B cell (primary cell): ENCODE measurements at regions of chr5 and their contacts with region 1.

Region 1: GRCh38 chr5:140244525-140245025 is 58.3 kb downstream of the PFDN1 start:
- DNase-seq: peak; percentile 83
- ATAC-seq: peak; percentile 82
- H3K4me3 ChIP-seq: no peak overlapping the region
- H3K4me3 Mint-ChIP-seq: no peak overlapping the region
- H3K27ac ChIP-seq: no peak overlapping the region
- H3K27ac Mint-ChIP-seq: no peak overlapping the region
- H3K4me1 ChIP-seq: peaks cover 14 to 19% of the 10 kb centered on the region in 2 donors
- H3K4me1 Mint-ChIP-seq: peaks cover 22% of the 10 kb centered on the region
- H3K27me3 ChIP-seq: no peaks in the 10 kb centered on the region
- H3K27me3 Mint-ChIP-seq: no peaks in the 10 kb centered on the region
- CTCF ChIP-seq: peak; percentile 87

Region 2: DNA sequence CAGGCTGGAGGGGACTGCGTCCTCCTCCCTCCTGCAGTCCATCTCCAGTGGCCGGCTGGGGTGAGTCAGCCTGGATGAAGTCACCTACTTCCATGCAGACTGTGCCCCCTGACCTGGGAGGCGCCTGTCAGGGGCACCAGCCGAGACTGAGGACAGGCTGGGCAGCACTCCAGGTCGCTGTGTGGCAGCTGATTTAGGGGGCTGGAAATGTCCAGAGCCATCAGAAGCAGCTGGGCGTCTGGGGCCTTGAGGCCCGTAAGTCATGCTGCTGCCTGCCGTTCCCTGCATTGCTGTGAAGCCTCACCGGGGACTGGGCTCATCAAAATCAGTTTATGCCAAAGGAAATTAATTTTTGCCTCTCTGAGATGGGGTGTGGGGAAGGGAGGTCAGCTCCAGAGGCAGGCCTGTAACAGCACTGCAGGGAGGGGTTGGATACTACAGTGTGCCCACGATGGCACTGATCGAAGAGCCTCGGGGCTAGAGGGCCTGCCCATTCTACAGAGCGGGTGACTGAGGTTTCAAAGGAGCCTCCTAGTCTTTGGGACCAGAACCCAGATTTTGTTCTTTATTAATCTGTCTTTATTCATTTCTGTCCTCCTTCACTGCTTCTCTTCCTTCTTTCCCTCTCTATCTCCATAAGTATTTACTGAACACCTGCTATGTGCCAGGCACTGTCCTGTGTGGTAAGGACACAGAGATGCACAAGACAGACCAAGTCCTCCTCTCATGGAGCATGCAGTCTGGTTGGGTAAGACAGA is 519.3 kb before region 1 on chr5:
- CTCF ChIA-PET with region 1: no interaction called
- POLR2A ChIA-PET with region 1: no interaction called
- intact Hi-C with region 1: no loop called
- DNase-seq: no peak
- ATAC-seq: no peak
- H3K4me3 ChIP-seq: no peak overlapping the region
- H3K4me3 Mint-ChIP-seq: no peak overlapping the region
- H3K27ac ChIP-seq: no peak overlapping the region
- H3K27ac Mint-ChIP-seq: no peak overlapping the region
- H3K4me1 ChIP-seq: peaks cover 6 to 29% of the 10 kb centered on the region in 2 donors
- H3K4me1 Mint-ChIP-seq: peaks cover 18% of the 10 kb centered on the region
- H3K27me3 ChIP-seq: no peaks in the 10 kb centered on the region
- H3K27me3 Mint-ChIP-seq: no peaks in the 10 kb centered on the region
- CTCF ChIP-seq: no peak

Region 3: GRCh38 chr5:140141241-140141640 is 103.3 kb before region 1 on chr5:
- CTCF ChIA-PET with region 1: no interaction called
- POLR2A ChIA-PET with region 1: no interaction called
- intact Hi-C with region 1: no loop called
- DNase-seq: no peak
- ATAC-seq: no peak
- H3K4me3 ChIP-seq: no peak overlapping the region
- H3K4me3 Mint-ChIP-seq: no peak overlapping the region
- H3K27ac ChIP-seq: no peak overlapping the region
- H3K27ac Mint-ChIP-seq: no peak overlapping the region
- H3K4me1 ChIP-seq: peaks cover 14 to 29% of the 10 kb centered on the region in 2 donors
- H3K4me1 Mint-ChIP-seq: peaks cover 18% of the 10 kb centered on the region
- H3K27me3 ChIP-seq: peaks cover 0 to 16% (median 9%) of the 10 kb centered on the region in 4 experiments
- H3K27me3 Mint-ChIP-seq: peaks cover 14% of the 10 kb centered on the region
- CTCF ChIP-seq: no peak

Region 4: DNA sequence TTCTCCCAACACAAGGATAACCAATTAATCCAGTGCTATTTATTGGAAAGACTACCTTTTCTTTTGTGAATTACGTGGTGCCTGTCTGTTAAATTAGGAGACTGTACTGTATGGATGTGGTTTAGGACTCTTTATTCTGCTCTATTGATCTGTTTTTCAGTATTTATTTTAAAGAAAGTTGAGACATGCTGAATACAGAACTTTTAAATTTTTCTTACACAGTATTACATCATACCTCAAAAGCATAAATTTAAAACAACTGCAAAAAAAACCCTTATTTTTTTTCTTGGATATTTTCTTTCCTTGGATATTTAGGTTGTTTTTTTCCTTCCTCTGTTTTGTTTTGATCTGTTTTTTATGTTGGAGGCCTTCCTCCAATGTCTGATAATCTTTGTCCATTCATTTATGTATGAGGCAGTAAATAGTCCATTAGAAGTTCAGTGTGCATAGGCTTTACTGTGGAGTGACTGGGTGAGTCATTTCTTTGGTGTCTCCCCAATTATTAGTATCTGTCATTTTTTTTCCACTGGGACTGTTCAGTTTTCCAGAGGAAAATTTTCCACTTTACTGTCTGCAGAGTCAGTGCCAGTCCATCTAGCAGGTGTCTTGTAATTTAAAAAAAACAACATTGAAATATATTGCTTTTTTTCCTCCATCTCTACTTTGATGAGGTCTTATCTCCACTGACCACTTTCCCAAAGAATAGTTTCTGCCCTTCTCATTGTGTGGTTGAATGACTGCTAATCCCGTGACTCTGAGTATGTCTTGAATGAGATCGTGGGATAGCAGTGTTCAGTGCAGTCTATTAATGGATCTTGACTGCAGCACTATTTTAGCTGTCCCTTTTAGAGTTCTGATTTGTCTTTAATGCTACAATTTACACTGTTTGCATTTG is 54.4 kb before region 1 on chr5:
- CTCF ChIA-PET with region 1: no interaction called
- POLR2A ChIA-PET with region 1: no interaction called
- intact Hi-C with region 1: no loop called
- DNase-seq: no peak
- ATAC-seq: no peak
- H3K4me3 ChIP-seq: no peak overlapping the region
- H3K4me3 Mint-ChIP-seq: no peak overlapping the region
- H3K27ac ChIP-seq: no peak overlapping the region
- H3K27ac Mint-ChIP-seq: no peak overlapping the region
- H3K4me1 ChIP-seq: no peaks in the 10 kb centered on the region
- H3K4me1 Mint-ChIP-seq: no peaks in the 10 kb centered on the region
- H3K27me3 ChIP-seq: no peaks in the 10 kb centered on the region
- H3K27me3 Mint-ChIP-seq: no peaks in the 10 kb centered on the region
- CTCF ChIP-seq: no peak

Region 5: GRCh38 chr5:140261403-140262171 is 17.0 kb after region 1 on chr5:
- CTCF ChIA-PET with region 1: interaction called, 19 read pairs
- POLR2A ChIA-PET with region 1: no interaction called
- intact Hi-C with region 1: no loop called
- DNase-seq: no peak
- ATAC-seq: no peak
- H3K4me3 ChIP-seq: no peak overlapping the region
- H3K4me3 Mint-ChIP-seq: no peak overlapping the region
- H3K27ac ChIP-seq: no peak overlapping the region
- H3K27ac Mint-ChIP-seq: no peak overlapping the region
- H3K4me1 ChIP-seq: no peaks in the 10 kb centered on the region
- H3K4me1 Mint-ChIP-seq: peaks cover 14% of the 10 kb centered on the region
- H3K27me3 ChIP-seq: no peaks in the 10 kb centered on the region
- H3K27me3 Mint-ChIP-seq: no peaks in the 10 kb centered on the region
- CTCF ChIP-seq: no peak

Region 6: GRCh38 chr5:140273401-140273877 is 28.9 kb after region 1 on chr5:
- CTCF ChIA-PET with region 1: interaction called, 18 read pairs
- POLR2A ChIA-PET with region 1: no interaction called
- intact Hi-C with region 1: no loop called
- DNase-seq: no peak
- ATAC-seq: no peak
- H3K4me3 ChIP-seq: no peak overlapping the region
- H3K4me3 Mint-ChIP-seq: no peak overlapping the region
- H3K27ac ChIP-seq: no peak overlapping the region
- H3K27ac Mint-ChIP-seq: no peak overlapping the region
- H3K4me1 ChIP-seq: no peaks in the 10 kb centered on the region
- H3K4me1 Mint-ChIP-seq: peaks cover 1% of the 10 kb centered on the region
- H3K27me3 ChIP-seq: no peaks in the 10 kb centered on the region
- H3K27me3 Mint-ChIP-seq: no peaks in the 10 kb centered on the region
- CTCF ChIP-seq: no peak

Region 7: DNA sequence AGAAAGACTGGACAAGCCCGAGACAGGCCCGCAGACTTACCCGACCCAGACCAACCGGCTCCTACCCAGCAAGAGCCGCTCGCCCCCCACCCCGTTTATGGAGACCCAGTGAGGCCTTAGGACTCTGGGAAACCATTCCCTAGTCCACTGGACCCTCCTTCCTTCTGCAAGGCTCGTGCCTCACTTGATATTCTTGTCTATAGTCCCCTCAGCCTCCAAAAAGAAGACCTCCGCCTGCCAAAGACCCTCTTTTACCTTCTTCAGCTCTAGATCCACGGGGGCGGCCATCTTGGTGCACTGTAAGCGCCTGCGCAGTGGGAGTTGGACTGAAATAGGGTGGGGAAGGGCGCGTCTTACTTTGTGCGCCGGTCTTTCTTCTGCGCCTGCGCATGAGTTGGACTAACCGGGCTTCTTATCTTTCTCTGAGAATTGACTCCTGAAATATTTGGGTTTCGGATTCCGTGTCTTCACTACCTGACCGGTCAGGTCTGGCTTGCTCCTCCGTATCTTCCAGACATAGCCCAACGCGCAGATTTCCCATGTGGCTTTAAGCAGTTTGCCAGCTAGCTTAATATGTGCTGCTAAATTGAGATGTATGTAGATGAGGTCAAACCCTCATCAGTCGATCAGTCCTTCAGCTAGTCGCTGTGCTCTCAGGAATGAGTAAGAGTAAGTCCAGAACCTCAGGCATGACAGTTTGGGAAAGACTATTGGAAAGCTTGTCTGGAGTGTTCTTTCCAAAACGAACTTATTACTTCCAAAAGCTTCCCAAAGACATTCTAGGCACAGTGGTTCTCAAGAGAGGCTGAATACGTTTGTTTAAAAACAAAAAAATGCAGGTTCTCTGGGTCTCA is 58.4 kb after region 1 on chr5 and contains the start of gene PFDN1:
- CTCF ChIA-PET with region 1: interaction called, 12 read pairs
- POLR2A ChIA-PET with region 1: no interaction called
- intact Hi-C with region 1: loop called (anchors 5 kb)
- DNase-seq: peak; percentile 94
- ATAC-seq: peak; percentile 98
- H3K4me3 ChIP-seq: peak within 1 kb of the TSS; percentile 85 to 96 (median 91)
- H3K4me3 Mint-ChIP-seq: peak within 1 kb of the TSS; percentile 97
- H3K27ac ChIP-seq: peak within 1 kb of the TSS; percentile 74 to 82
- H3K27ac Mint-ChIP-seq: peak within 1 kb of the TSS; percentile 95
- H3K4me1 ChIP-seq: peaks cover 12% of the 10 kb centered on the region in 2 donors
- H3K4me1 Mint-ChIP-seq: peaks cover 13% of the 10 kb centered on the region
- H3K27me3 ChIP-seq: no peaks in the 10 kb centered on the region
- H3K27me3 Mint-ChIP-seq: peaks cover 9% of the 10 kb centered on the region
- CTCF ChIP-seq: no peak
- total RNA-seq, gene PFDN1: 29.8 and 30.3 TPM in 2 replicates

Region 8: GRCh38 chr5:140351609-140352334 is 107.2 kb after region 1 on chr5:
- CTCF ChIA-PET with region 1: interaction called, 594 read pairs
- POLR2A ChIA-PET with region 1: interaction called, 3 read pairs
- intact Hi-C with region 1: loop called (anchors 1 kb)
- DNase-seq: peak; percentile 82
- ATAC-seq: peak; percentile 76
- H3K4me3 ChIP-seq: no peak overlapping the region
- H3K4me3 Mint-ChIP-seq: no peak overlapping the region
- H3K27ac ChIP-seq: no peak overlapping the region
- H3K27ac Mint-ChIP-seq: no peak overlapping the region
- H3K4me1 ChIP-seq: peaks cover 26 to 30% of the 10 kb centered on the region in 2 donors
- H3K4me1 Mint-ChIP-seq: peaks cover 25% of the 10 kb centered on the region
- H3K27me3 ChIP-seq: peaks cover 0 to 12% (median 0%) of the 10 kb centered on the region in 4 experiments
- H3K27me3 Mint-ChIP-seq: peaks cover 9% of the 10 kb centered on the region
- CTCF ChIP-seq: peak; percentile 93

Region 9: DNA sequence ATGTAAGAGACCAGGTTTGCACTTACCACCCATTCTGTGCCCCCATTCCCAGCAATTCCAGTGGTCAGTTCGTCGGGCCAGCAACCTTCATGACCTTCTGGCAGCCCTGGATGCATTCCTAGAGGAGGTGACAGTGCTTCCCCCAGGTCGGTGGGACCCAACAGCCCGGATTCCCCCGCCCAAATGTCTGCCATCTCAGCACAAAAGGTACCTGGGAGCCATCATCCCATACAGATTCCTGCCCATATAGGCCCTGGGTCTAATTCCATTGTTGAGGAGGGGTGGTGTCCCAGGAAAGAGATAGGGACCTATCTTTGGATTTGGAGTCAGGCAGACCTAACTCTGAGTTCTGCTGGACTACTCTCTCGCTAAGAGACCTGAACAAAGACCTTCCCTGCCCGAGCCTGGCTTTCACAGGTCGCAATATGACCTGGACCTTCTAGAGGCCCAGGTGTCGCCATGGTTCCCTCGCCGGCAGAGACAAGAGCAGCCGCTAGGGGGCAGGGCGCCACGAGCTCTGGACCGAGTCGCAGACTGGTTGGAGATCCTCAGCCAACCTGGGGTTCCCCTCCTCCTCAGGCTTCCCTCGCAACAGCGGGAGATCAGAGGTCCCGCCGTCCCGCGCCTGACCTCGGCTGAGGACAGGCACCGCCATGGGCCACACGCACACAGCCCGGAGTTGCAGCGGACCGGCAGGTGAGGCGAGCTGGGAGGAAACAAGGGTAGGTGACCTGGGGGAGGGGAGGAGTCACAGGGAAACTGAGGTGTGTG is 118.5 kb after region 1 on chr5:
- CTCF ChIA-PET with region 1: interaction called, 117 read pairs
- POLR2A ChIA-PET with region 1: no interaction called
- intact Hi-C with region 1: no loop called
- DNase-seq: peak; percentile 84
- ATAC-seq: peak; percentile 94
- H3K4me3 ChIP-seq: peak overlapping the region in 3 of 5 experiments; percentile 15 to 48 (median 29)
- H3K4me3 Mint-ChIP-seq: peak overlapping the region; percentile 82
- H3K27ac ChIP-seq: no peak overlapping the region
- H3K27ac Mint-ChIP-seq: peak overlapping the region; percentile 46
- H3K4me1 ChIP-seq: peaks cover 4 to 7% of the 10 kb centered on the region in 2 donors
- H3K4me1 Mint-ChIP-seq: peaks cover 5% of the 10 kb centered on the region
- H3K27me3 ChIP-seq: no peaks in the 10 kb centered on the region
- H3K27me3 Mint-ChIP-seq: peaks cover 6% of the 10 kb centered on the region
- CTCF ChIP-seq: peak; percentile 97